ENCODE measurements at regions of chr10 and their contacts with region 1.

Region 1: GRCh38 chr10:100562008-100562711 is 26.4 kb downstream of the HIF1AN start:
- DNase-seq: peak in 1 of 2 experiments; percentile 63
- H3K4me3 ChIP-seq: no peak overlapping the region
- H3K27ac ChIP-seq: no peak overlapping the region
- H3K4me1 ChIP-seq: no peaks in the 10 kb centered on the region
- H3K27me3 ChIP-seq: peaks cover 16% of the 10 kb centered on the region; the same call in 1 of the 2 replicates
- CTCF ChIP-seq: peak; percentile 64

Region 2: GRCh38 chr10:100535715-100536353 is 26.3 kb before region 1 on chr10 and contains the start of gene HIF1AN:
- CTCF ChIA-PET with region 1: interaction called, 6 read pairs
- POLR2A ChIA-PET with region 1: interaction called, 12 read pairs
- intact Hi-C with region 1: no loop called
- DNase-seq: peak; percentile 78 to 82
- H3K4me3 ChIP-seq: peak within 1 kb of the TSS; percentile 74
- H3K27ac ChIP-seq: no peak within 1 kb of the TSS
- H3K4me1 ChIP-seq: peaks cover 5% of the 10 kb centered on the region; the same call in 1 of the 2 replicates
- H3K27me3 ChIP-seq: no peaks in the 10 kb centered on the region
- CTCF ChIP-seq: peak; percentile 79
- total RNA-seq, gene HIF1AN: 37.5 and 42.0 TPM in 2 replicates

Region 3: GRCh38 chr10:100743626-100744135 is 181.5 kb after region 1 on chr10:
- CTCF ChIA-PET with region 1: no interaction called
- POLR2A ChIA-PET with region 1: no interaction called
- intact Hi-C with region 1: loop called (anchors 5 kb)
- DNase-seq: no peak
- H3K4me3 ChIP-seq: no peak overlapping the region
- H3K27ac ChIP-seq: no peak overlapping the region
- H3K4me1 ChIP-seq: no peaks in the 10 kb centered on the region
- H3K27me3 ChIP-seq: peaks cover 75% of the 10 kb centered on the region
- CTCF ChIP-seq: peak; percentile 55

Region 4: GRCh38 chr10:100878291-100878910 is 316.2 kb after region 1 on chr10:
- CTCF ChIA-PET with region 1: interaction called, 13 read pairs
- POLR2A ChIA-PET with region 1: no interaction called
- intact Hi-C with region 1: loop called (anchors 1 kb)
- DNase-seq: peak; percentile 43 to 46
- H3K4me3 ChIP-seq: no peak overlapping the region
- H3K27ac ChIP-seq: no peak overlapping the region
- H3K4me1 ChIP-seq: no peaks in the 10 kb centered on the region
- H3K27me3 ChIP-seq: 0 out of 2 replicates have a peak, but pooled peaks cover 8% of the 10 kb centered on the region
- CTCF ChIP-seq: peak; percentile 71

Region 5: GRCh38 chr10:101012525-101013364 is 450.6 kb after region 1 on chr10:
- CTCF ChIA-PET with region 1: no interaction called
- POLR2A ChIA-PET with region 1: no interaction called
- intact Hi-C with region 1: loop called (anchors 5 kb)
- DNase-seq: peak; percentile 67 to 76
- H3K4me3 ChIP-seq: no peak overlapping the region
- H3K27ac ChIP-seq: no peak overlapping the region
- H3K4me1 ChIP-seq: peaks cover 5% of the 10 kb centered on the region
- H3K27me3 ChIP-seq: no peaks in the 10 kb centered on the region
- CTCF ChIP-seq: peak; percentile 78

Measured in PC-9 (cell line).